HCT116 (cell line): ENCODE measurements at regions of chr10 and their contacts with region 1.

Region 1: GRCh38 chr10:15106352-15107013 is 9.3 kb downstream of the RPP38 start:
- DNase-seq: peak; percentile 50
- ATAC-seq: peak; percentile 99
- H3K4me3 ChIP-seq: no peak overlapping the region
- H3K27ac ChIP-seq: no peak overlapping the region
- H3K4me1 ChIP-seq: no peaks in the 10 kb centered on the region
- H3K27me3 ChIP-seq: no peaks in the 10 kb centered on the region
- CTCF ChIP-seq: peak; percentile 84 to 99 (median 96)
- POLR2A ChIP-seq: no peak
- RAD21 ChIP-seq: peak; percentile 92

Region 2: DNA sequence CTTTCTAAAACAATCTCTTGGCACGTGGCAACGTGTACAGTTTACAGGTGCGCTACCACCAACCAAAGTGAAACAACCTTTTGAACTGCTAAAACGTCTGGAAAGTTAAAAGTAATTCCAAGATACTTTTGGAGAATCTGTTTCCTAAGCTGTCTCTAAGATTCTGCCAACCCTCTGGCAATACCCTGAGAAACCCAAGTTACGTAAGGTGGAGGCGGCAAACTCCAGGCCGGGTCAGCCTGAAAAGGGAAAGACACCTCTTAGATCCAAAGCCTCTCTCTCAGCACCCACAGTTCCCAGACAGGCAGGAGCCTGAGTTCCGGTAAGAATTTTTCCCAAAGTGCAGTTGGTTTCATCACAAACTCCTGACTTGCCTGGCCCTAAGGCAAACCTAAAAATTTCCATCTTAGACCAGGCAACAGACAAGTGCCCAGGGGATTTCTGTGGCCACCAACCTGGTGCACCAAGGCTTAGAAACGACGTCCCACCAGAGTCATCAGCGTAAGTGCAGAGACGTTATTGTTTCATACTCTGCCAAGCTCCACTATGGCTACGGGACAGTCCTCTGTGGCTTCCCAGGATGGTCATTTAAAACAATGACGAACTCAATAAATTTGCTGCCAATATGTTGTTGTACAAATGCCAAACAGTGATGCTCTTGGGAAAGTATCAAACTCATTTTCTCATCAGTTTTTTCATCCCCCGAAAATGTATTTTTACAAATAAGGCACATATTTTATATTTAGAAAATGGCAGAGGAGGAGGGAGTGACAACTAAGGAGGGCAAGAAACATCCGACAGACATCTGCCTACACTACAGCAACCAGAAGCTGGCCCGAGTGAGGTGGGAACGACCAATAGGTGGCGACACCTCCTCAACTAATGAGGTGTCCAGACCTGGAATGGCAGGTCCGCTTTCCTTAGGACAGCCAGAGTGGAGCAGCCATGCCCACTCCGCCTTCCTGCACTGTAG is 570.0 kb before region 1 on chr10:
- CTCF ChIA-PET with region 1: interaction called, 4 read pairs
- POLR2A ChIA-PET with region 1: no interaction called
- RAD21 ChIA-PET with region 1: no interaction called
- intact Hi-C with region 1: loop called (anchors 1 kb)
- DNase-seq: peak; percentile 54
- ATAC-seq: peak; percentile 99
- H3K4me3 ChIP-seq: no peak overlapping the region
- H3K27ac ChIP-seq: no peak overlapping the region
- H3K4me1 ChIP-seq: peaks cover 0 to 17% of the 10 kb centered on the region in 2 experiments; a peak in 2 of 4 replicates
- H3K27me3 ChIP-seq: no peaks in the 10 kb centered on the region
- CTCF ChIP-seq: peak; percentile 65 to 80 (median 69)
- POLR2A ChIP-seq: no peak
- RAD21 ChIP-seq: peak; percentile 88

Region 3: DNA sequence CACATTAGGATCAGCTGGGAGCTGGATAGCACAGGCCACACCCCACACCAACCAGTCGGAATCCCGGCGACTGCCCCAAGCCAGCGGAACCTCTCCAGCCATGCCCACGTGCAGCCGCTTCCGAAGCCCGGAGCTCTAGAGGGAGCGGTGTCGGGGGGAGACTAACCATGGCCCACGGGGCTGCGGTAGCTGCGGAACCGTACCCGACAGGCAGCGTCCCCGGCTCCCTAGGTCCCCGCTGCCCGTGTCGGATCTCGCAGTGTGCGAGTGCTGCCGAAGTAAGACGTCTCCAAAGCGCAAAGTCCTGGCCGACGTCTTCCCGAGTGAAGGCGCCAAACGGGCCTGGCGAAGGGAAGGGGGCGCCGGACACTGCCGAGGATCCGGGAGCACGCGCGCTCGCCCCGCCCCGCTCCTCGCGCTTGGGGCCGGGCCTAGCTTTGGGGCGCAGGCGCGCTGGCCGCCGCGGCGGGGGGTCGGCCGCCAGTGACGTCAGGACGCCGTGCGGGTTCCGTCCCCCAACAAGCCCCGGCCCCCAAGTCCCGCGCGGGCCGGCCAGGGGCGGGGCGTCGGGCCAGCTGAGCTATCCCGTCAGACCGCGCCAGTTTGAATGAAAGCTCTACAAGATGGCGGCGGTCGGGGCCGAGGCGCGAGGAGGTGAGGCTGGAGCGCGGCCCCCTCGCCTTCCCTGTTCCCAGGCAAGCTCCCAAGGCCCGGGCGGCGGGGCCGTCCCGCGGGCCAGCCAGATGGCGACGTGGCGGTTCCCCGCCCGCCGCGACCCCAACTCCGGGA is 228.0 kb before region 1 on chr10 and contains the start of gene SUV39H2:
- CTCF ChIA-PET with region 1: no interaction called
- POLR2A ChIA-PET with region 1: no interaction called
- RAD21 ChIA-PET with region 1: no interaction called
- intact Hi-C with region 1: loop called (anchors 5 kb)
- DNase-seq: peak; percentile 80
- ATAC-seq: peak; percentile 88
- H3K4me3 ChIP-seq: peak within 1 kb of the TSS; percentile 76 to 88
- H3K27ac ChIP-seq: peak within 1 kb of the TSS; percentile 97
- H3K4me1 ChIP-seq: peaks cover 9 to 19% of the 10 kb centered on the region in 2 experiments
- H3K27me3 ChIP-seq: no peaks in the 10 kb centered on the region
- CTCF ChIP-seq: no peak
- POLR2A ChIP-seq: peak; percentile 79
- RAD21 ChIP-seq: no peak
- total RNA-seq, gene SUV39H2: 26.6 TPM

Region 4: DNA sequence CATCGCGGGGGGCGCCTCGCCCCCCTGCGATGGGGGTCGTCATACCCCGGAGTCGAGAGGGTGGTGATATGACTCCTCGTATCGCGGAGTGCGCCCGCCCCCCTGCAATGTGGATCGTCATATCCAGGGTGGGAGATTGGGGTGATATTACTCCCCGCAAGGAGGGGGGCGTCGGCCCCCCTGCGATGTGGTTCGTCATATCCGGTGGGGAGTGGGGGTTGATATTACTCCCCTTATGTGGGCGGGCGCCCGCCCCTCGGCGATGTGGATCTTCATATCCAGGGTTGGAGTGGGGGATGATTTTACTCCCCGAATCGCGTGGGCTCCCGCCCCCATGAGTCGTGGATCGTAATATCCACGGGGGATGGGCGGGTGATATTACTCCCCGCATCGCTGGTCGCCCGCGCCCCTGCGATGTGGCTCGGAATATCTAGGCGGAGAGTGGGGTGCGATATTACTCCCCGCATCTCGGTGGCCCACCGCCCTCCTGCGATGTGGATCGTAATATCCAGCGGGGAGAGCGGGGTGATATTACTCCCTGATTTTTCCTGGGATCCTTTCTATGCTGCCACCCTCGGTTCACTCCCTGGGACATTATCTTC is 110.4 kb before region 1 on chr10:
- CTCF ChIA-PET with region 1: interaction called, 3 read pairs
- POLR2A ChIA-PET with region 1: interaction called, 3 read pairs
- RAD21 ChIA-PET with region 1: no interaction called
- intact Hi-C with region 1: loop called (anchors 1 kb)
- DNase-seq: no peak
- ATAC-seq: no peak
- H3K4me3 ChIP-seq: no peak overlapping the region
- H3K27ac ChIP-seq: no peak overlapping the region
- H3K4me1 ChIP-seq: peaks cover 0 to 3% of the 10 kb centered on the region in 2 experiments; a peak in 1 of 4 replicates
- H3K27me3 ChIP-seq: no peaks in the 10 kb centered on the region
- CTCF ChIP-seq: no peak
- POLR2A ChIP-seq: no peak
- RAD21 ChIP-seq: no peak

Region 5: GRCh38 chr10:15451137-15452094 is 344.9 kb after region 1 on chr10:
- CTCF ChIA-PET with region 1: no interaction called
- POLR2A ChIA-PET with region 1: no interaction called
- RAD21 ChIA-PET with region 1: no interaction called
- intact Hi-C with region 1: no loop called
- DNase-seq: no peak
- ATAC-seq: no peak
- H3K4me3 ChIP-seq: no peak overlapping the region
- H3K27ac ChIP-seq: no peak overlapping the region
- H3K4me1 ChIP-seq: no peaks in the 10 kb centered on the region
- H3K27me3 ChIP-seq: peaks cover 63% of the 10 kb centered on the region
- CTCF ChIP-seq: no peak
- POLR2A ChIP-seq: no peak
- RAD21 ChIP-seq: no peak